ENCODE measurements at regions of chrX and their contacts with region 1.

Region 1: GRCh38 chrX:110407910-110408545 is 49.4 kb downstream of the RTL9 start:
- DNase-seq: peak in 8 of 9 experiments; percentile 13 to 65 (median 49)
- ATAC-seq: peak; percentile 31
- H3K4me3 ChIP-seq: no peak overlapping the region
- H3K4me3 Mint-ChIP-seq: no peak overlapping the region
- H3K27ac ChIP-seq: no peak overlapping the region
- H3K27ac Mint-ChIP-seq: no peak overlapping the region
- H3K4me1 ChIP-seq: no peaks in the 10 kb centered on the region
- H3K4me1 Mint-ChIP-seq: no peaks in the 10 kb centered on the region
- H3K27me3 ChIP-seq: no peaks in the 10 kb centered on the region
- H3K27me3 Mint-ChIP-seq: no peaks in the 10 kb centered on the region
- CTCF ChIP-seq: peak; percentile 43

Region 2: GRCh38 chrX:110359273-110359672 is 48.8 kb before region 1 on chrX:
- CTCF ChIA-PET with region 1: no interaction called
- POLR2A ChIA-PET with region 1: no interaction called
- intact Hi-C with region 1: no loop called
- DNase-seq: no peak
- ATAC-seq: no peak
- H3K4me3 ChIP-seq: no peak overlapping the region
- H3K4me3 Mint-ChIP-seq: no peak overlapping the region
- H3K27ac ChIP-seq: no peak overlapping the region
- H3K27ac Mint-ChIP-seq: no peak overlapping the region
- H3K4me1 ChIP-seq: no peaks in the 10 kb centered on the region
- H3K4me1 Mint-ChIP-seq: no peaks in the 10 kb centered on the region
- H3K27me3 ChIP-seq: no peaks in the 10 kb centered on the region
- H3K27me3 Mint-ChIP-seq: peaks cover 3% of the 10 kb centered on the region
- CTCF ChIP-seq: no peak

Region 3: DNA sequence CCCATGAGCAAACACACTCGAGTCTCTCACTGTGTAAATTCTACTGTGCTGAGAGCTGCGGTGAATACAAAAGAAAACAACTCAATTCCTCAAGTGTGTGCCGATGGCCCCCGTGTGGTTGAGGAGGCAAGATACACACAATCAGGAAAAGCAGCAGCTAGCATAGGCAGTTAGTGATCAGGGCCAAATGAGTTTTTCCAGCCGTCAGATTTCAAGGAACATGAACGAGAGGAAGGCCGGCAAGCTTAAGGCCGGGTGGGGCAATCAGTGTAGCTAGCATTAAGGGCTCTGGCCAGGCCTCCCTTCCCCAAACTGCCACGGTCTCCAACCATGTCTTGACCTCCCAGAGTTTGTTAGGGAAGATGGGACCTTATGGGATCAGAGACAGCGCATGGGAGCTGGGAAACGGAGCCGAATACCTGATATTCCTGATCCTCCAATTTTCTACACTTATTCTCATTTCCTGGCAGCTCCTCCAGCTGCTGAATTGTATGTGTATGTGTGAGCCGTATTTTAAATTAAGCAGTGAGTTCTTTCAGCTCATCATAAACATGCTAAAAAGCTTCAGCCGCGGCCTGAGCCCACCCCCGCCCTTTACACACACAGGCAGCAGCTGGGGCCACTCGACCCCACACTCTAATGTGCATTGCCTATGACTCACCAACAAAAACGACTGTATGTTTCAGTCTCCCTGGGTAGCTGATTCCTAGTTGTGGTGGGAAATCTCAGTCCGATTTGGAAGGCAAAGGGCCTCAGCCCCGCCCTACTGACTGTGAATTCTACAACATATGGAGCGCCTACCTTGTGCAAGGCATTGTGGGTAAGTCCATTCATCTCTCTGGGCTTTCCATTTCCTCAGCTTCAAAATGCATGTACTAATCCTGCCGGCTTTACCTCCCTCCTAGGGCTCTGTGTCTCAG is 10.5 kb after region 1 on chrX:
- CTCF ChIA-PET with region 1: interaction called, 31 read pairs
- POLR2A ChIA-PET with region 1: no interaction called
- intact Hi-C with region 1: no loop called
- DNase-seq: no peak
- ATAC-seq: no peak
- H3K4me3 ChIP-seq: no peak overlapping the region
- H3K4me3 Mint-ChIP-seq: no peak overlapping the region
- H3K27ac ChIP-seq: no peak overlapping the region
- H3K27ac Mint-ChIP-seq: no peak overlapping the region
- H3K4me1 ChIP-seq: no peaks in the 10 kb centered on the region
- H3K4me1 Mint-ChIP-seq: no peaks in the 10 kb centered on the region
- H3K27me3 ChIP-seq: no peaks in the 10 kb centered on the region
- H3K27me3 Mint-ChIP-seq: peaks cover 2% of the 10 kb centered on the region
- CTCF ChIP-seq: no peak

Region 4: DNA sequence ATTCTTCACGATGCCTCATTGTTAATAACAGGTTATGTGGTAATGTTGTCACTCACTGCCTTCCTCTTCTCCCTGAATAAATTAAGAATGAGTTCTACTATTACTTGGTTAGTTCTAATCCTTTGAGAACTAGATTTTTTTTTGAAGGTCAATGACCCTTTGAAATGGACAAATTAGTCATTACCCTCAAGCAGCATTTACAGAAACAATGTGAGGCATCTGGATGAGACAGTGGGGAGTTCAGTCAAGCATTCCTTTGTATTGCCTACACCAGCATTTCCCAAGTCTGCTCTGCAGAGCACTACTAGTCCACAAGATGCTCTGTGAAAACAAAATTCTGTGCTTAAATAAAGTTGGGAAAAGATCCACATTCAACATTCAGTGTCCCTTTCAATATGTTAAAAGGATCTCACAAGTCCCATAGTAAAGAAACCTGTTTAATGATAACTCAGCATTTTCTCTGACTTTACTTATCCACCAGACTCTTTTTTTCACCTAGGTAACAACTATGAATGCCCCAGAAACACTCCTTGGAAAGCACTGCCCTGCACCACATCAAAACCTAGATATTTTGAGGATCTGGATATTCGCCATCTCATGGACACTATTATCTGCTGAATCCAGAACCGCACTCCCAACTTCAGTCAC is 327.0 kb after region 1 on chrX:
- CTCF ChIA-PET with region 1: no interaction called
- POLR2A ChIA-PET with region 1: no interaction called
- intact Hi-C with region 1: no loop called
- DNase-seq: no peak
- ATAC-seq: no peak
- H3K4me3 ChIP-seq: no peak overlapping the region
- H3K4me3 Mint-ChIP-seq: no peak overlapping the region
- H3K27ac ChIP-seq: no peak overlapping the region
- H3K27ac Mint-ChIP-seq: no peak overlapping the region
- H3K4me1 ChIP-seq: no peaks in the 10 kb centered on the region
- H3K4me1 Mint-ChIP-seq: no peaks in the 10 kb centered on the region
- H3K27me3 ChIP-seq: no peaks in the 10 kb centered on the region
- H3K27me3 Mint-ChIP-seq: no peaks in the 10 kb centered on the region
- CTCF ChIP-seq: no peak